ENCODE measurements at regions of chr3 and their contacts with region 1.

Region 1: DNA sequence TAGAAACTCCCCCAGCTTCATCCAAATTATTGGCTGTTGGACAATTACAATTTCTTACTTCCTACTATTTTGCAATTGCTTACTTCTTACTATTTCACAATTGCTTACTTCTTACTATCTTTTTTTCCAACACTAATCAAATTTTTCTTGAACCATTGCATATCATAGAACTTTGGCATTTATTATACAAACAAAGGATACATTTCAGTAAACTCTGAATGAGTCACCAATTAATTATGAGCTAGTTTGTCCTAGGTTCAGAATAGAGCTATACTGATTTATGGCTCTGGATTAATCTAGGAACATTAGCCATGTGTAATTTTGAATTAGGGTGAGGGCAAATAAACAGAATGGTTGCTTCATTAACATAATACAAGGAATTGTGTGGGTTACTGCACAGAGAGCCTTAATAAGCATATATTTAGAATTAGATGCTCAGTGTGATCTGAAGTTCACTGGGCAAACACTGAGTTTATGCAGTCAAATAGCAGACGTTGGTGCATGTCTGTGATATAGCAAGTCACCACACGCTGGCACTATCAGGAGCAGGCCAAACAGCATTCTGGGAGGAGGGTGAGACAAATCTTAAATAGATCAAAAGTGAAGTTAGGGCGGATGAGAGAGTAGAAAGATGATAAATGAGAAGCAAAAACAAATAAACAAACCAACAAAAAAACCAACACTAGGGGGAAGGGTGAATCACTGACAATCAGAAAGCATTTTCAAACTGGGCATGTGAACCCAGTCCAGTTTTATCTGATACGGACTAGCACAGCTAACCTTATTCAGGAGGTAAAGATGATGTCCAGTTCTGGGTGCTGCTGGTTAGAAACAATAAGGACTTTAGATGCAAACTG is 21.5 kb downstream of the GABRR3 start:
- DNase-seq: no peak
- ATAC-seq: no peak
- H3K4me3 ChIP-seq: no peak overlapping the region
- H3K27ac ChIP-seq: peak overlapping the region; percentile 12
- H3K4me1 ChIP-seq: peaks cover 58% of the 10 kb centered on the region
- H3K27me3 ChIP-seq: no peaks in the 10 kb centered on the region
- CTCF ChIP-seq: no peak
- EP300 ChIP-seq: no peak
- POLR2A ChIP-seq: no peak
- RAD21 ChIP-seq: no peak

Region 2: DNA sequence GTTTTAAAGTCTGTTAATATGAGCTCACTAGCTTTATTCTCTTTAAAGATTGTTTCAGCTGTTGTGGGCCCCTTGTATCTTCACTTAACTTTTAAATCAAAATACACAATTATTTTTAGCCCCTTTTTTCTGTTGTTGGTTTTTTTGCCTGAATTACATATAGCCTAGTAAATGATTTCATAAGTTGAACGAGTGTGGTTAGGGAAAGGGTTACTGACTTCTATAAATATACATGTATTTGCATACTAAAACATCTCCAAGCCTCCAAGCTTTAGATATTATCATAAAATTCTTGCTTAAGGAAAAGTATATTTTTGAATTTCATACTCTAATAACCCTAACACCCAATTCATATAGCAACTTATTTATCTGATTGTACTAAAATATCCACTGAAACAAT is 322.3 kb before region 1 on chr3:
- CTCF ChIA-PET with region 1: no interaction called
- POLR2A ChIA-PET with region 1: no interaction called
- in situ Hi-C with region 1: no loop called
- intact Hi-C with region 1: no loop called
- DNase-seq: no peak
- ATAC-seq: no peak
- H3K4me3 ChIP-seq: no peak overlapping the region
- H3K27ac ChIP-seq: no peak overlapping the region
- H3K4me1 ChIP-seq: no peaks in the 10 kb centered on the region
- H3K27me3 ChIP-seq: no peaks in the 10 kb centered on the region
- CTCF ChIP-seq: no peak
- EP300 ChIP-seq: no peak
- POLR2A ChIP-seq: no peak
- RAD21 ChIP-seq: no peak

Region 3: DNA sequence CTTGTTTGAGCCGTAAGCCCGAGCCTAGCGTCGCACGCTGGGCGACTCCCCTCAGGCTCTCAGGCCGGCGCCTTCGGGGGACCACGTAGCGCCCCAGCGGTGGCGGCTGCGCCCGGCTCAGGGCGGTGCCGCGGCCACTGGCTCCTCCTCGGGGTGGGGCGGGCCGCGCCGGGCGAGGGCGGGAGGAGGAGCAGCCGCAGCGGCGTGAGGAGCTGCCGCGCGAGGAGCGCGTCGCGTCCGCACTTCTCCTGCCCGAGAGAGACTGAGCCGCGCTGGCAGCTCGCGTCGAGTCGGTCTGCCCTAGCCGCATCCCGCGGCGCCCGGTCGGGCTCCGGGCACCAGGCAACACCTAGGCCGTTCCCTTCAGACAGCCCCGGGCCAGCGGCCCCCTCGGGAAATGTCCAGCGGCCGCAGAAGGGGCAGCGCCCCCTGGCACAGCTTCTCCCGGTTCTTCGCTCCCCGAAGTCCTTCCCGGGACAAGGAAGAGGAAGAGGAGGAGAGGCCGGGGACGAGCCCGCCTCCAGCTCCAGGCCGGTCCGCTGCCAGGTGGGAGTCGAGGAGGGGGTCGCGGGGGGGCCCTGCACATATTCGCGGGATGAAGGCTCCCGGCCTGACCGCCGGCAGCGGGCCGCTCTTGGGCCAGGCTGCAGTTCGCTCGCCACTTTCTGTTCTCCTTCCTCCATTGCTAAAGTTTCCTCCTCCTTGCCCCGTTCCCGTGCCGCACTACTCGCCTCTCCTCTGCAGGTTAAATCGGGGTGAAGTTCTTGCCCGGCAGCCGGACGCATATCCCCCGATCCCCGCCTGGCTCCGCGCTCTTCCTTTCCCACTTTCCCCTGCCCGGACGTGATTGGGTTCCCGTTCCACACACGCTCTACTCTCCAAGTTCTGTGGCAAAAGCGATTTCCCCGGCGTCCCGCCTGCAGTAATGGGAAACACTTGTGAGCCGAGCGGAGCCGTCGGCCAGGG is 191.5 kb before region 1 on chr3 and contains the start of gene CRYBG3:
- CTCF ChIA-PET with region 1: no interaction called
- POLR2A ChIA-PET with region 1: interaction called, 3 read pairs
- in situ Hi-C with region 1: no loop called
- intact Hi-C with region 1: loop called (anchors 1 kb)
- DNase-seq: peak; percentile 53
- ATAC-seq: peak; percentile 98
- H3K4me3 ChIP-seq: peak within 1 kb of the TSS; percentile 94 to 97 (median 94)
- H3K27ac ChIP-seq: peak within 1 kb of the TSS; percentile 40
- H3K4me1 ChIP-seq: peaks cover 36% of the 10 kb centered on the region
- H3K27me3 ChIP-seq: peaks cover 2 to 8% of the 10 kb centered on the region in 2 experiments; a peak in 3 of 5 replicates
- CTCF ChIP-seq: peak; percentile 58
- EP300 ChIP-seq: no peak
- POLR2A ChIP-seq: peak; percentile 81 to 86
- RAD21 ChIP-seq: no peak; the same call in none of the 2 replicates
- total RNA-seq, gene CRYBG3: 10.9 and 15.9 TPM in 2 replicates

Region 4: DNA sequence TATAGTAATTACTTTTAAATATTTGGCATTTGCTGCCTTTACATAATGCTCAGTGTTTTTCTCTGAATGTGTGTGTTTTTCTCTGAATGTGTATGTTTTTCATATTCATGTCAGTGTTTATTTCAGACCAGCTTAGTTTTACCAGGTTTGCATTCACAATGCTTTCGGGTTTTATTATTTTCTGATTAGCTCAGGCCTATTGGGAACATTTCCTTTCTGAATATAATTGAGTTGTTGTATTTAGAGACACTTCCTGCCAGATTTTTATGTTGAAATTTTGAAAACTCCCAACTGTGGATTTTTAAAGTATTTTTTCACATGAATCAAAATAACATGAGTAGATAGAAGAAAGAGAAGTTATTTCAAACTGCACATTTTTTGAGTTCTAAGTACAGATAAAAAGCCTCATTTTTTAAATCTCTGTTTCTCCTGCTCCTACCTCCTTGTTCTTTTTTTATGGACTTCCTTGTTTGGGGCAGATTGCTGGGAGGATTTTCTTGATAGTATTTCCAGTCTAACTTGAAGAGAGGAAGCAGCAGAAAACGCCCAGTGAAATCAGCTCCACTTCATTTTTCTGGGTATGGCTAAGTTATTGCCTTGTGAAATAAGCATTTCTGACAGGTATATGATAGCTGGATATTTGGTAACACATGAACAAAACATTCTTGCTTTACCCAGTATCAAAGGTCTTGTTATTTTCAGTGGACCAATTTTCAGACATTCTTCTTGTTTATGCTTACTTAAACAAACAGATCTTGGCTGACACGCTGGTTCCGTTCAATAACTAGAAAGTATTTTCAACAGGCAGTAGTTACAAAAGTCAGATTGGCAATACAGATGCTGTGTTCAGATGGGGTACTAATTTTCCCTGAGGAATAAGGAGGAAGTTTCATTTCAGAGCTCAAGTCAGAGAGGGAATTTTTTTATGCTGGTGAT is 112.1 kb before region 1 on chr3:
- CTCF ChIA-PET with region 1: no interaction called
- POLR2A ChIA-PET with region 1: no interaction called
- in situ Hi-C with region 1: no loop called
- intact Hi-C with region 1: loop called (anchors 5 kb)
- DNase-seq: peak; percentile 32
- ATAC-seq: peak; percentile 83
- H3K4me3 ChIP-seq: no peak overlapping the region
- H3K27ac ChIP-seq: peak overlapping the region; percentile 18
- H3K4me1 ChIP-seq: peaks cover 10% of the 10 kb centered on the region
- H3K27me3 ChIP-seq: no peaks in the 10 kb centered on the region
- CTCF ChIP-seq: no peak
- EP300 ChIP-seq: no peak
- POLR2A ChIP-seq: no peak
- RAD21 ChIP-seq: no peak

Region 5: DNA sequence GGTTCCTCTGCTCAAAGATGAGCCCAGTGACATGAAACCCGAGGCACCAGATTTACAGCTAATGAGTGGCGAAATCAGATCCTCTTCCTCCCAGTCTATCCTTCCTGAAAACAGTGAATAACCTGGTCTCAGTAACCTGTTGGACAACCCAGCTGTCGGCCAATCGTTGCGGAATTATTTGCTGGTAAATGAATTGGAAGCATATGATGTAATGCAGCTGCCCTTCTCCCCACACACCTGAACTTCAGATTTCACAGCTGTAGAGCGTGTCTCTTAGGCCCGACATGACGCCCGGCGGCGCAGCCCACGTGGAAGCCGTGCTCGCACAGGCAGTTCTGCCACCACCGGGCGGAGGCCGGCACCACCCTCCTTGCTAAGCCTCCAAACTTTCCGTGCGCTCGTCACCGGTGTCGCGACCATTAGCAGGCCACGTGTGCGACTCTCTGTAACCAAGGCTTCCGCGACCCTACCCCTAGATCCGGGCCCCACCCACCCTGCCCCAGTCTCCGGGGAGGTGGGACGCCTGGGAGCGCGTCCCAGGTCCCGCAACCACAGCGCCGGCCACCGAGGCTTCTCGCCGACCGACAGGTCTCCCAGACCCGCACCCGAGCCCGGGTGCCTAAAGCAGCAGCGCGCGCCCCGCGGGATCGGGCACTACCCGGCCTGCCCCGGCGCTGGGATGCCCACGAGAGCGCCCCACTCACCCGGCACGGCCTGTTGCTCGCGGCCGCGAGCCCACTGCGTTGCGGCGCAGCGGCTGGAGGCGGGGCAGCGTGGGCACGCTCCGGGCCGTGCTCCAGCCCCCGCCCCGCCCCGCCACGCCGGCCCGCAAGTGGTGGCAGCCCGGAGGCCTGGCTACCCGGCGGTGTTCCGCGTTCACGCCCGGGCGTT is 41.7 kb before region 1 on chr3 and contains the start of gene RIOX2:
- CTCF ChIA-PET with region 1: no interaction called
- POLR2A ChIA-PET with region 1: interaction called, 9 read pairs
- in situ Hi-C with region 1: loop called (anchors 5 kb)
- intact Hi-C with region 1: loop called (anchors 1 kb)
- DNase-seq: peak; percentile 52
- ATAC-seq: peak; percentile 97
- H3K4me3 ChIP-seq: peak within 1 kb of the TSS; percentile 64 to 85 (median 67)
- H3K27ac ChIP-seq: peak within 1 kb of the TSS; percentile 68
- H3K4me1 ChIP-seq: peaks cover 44% of the 10 kb centered on the region
- H3K27me3 ChIP-seq: no peaks in the 10 kb centered on the region; a peak in 1 of 5 replicates
- CTCF ChIP-seq: peak; percentile 39
- EP300 ChIP-seq: no peak
- POLR2A ChIP-seq: peak; percentile 61 to 81; a peak in 3 of 4 replicates
- RAD21 ChIP-seq: peak; percentile 13; the same call in 1 of the 2 replicates
- total RNA-seq, gene RIOX2: 43.3 and 52.5 TPM in 2 replicates

Region 6: GRCh38 chr3:97994328-97994945 is 19.2 kb before region 1 on chr3:
- CTCF ChIA-PET with region 1: no interaction called
- POLR2A ChIA-PET with region 1: interaction called, 17 read pairs
- in situ Hi-C with region 1: no loop called
- intact Hi-C with region 1: loop called (anchors 1 kb)
- DNase-seq: peak; percentile 58
- ATAC-seq: peak; percentile 85
- H3K4me3 ChIP-seq: no peak overlapping the region
- H3K27ac ChIP-seq: peak overlapping the region; percentile 18
- H3K4me1 ChIP-seq: peaks cover 60% of the 10 kb centered on the region
- H3K27me3 ChIP-seq: no peaks in the 10 kb centered on the region
- CTCF ChIP-seq: no peak
- EP300 ChIP-seq: peak in 1 of 2 experiments; percentile 63; a peak in 2 of 4 replicates
- POLR2A ChIP-seq: no peak
- RAD21 ChIP-seq: no peak

Measured in HepG2 (cell line).